Dendritic cell treated with granulocyte-macrophage colony-stimulating factor and Interleukin-4, amounts not matched to agents 40 ng/mL and 50 ng/mL, for 4 days (primary cell): ENCODE measurements at regions of chr18 and their contacts with region 1.

Region 1: DNA sequence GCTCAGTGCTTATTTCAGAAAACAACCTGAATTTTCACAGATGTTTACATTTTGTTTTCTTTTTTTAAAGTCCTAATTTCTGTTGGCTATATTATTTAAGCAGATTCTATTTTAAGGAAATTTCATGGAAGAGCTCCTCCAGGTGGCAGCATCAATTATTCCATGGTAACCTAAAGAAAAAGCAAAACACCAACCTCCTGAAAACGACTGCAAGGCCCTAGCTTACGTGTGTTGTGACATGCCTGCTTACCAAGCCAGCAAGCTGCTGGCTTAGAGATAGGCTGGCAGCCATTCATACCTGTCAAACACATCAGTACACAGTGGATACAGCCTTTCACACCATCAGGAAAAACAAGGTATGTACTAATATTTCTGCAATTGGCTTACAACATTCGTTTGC is 64.9 kb downstream of the LPIN2 start:
- H3K4me3 Mint-ChIP-seq: no peak overlapping the region
- H3K27ac Mint-ChIP-seq: no peak overlapping the region
- H3K4me1 Mint-ChIP-seq: peaks cover 8% of the 10 kb centered on the region
- H3K27me3 Mint-ChIP-seq: no peaks in the 10 kb centered on the region

Region 2: DNA sequence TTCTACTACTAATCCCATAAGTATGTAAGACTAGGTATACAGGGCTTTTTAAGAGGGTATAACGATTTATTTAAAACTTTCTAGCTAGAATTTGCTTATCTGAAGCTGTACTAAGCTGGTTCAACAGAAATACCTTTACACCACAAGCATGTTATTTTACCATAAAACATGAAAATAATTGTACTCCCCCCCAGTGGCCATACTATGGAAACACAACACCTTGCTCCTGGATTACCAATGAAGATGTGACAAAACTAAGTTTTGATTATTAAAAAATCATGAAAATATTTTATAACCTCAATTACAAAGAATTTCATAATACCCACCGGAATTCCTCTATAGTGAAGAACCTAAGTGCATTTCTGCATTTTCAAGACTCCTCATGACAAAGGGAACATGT is 37.6 kb after region 1 on chr18:
- intact Hi-C with region 1: loop called (anchors 5 kb)
- H3K4me3 Mint-ChIP-seq: no peak overlapping the region
- H3K27ac Mint-ChIP-seq: no peak overlapping the region
- H3K4me1 Mint-ChIP-seq: peaks cover 35% of the 10 kb centered on the region
- H3K27me3 Mint-ChIP-seq: no peaks in the 10 kb centered on the region